Activated naive CD4-positive, alpha-beta T cell treated with anti-CD3 and anti-CD28 coated beads for 36 hours (primary cell): ENCODE measurements at regions of chr7 and their contacts with region 1.

Region 1: DNA sequence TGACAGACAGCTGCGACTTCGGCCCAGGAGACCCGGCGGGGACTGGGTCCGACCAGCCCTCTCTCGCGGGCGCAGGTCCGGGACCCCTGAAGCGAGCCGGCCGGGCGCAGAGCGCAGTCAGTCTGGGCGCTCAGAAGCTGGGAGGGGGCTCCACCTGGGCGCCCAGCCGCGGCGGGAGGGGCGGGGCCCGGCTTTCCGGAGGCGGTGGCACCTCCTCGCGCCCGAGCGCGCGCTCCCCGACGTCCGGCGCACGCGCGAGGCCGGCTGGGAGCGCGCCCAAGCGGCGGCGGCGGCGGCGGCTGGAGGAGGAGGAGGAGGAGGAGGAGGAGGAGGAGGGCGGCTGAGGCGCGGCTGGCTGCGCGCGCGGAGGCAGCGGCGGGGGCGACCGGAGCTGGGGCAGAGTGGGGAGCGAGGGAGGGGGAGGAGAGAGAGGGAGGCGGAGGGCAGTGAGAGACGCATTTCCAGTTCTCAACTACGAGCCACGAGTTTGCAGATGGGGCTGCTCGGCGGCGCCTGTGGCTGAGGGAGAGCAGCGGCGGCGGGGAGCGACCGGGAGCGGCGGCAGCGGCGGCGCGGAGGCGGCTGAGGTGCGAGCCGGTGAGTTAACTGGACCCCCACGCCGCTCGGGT is at the start of gene PALS2:
- DNase-seq: peak; percentile 76
- H3K4me3 Mint-ChIP-seq: peak within 1 kb of the TSS; percentile 84
- H3K27ac Mint-ChIP-seq: peak within 1 kb of the TSS; percentile 72
- H3K4me1 Mint-ChIP-seq: peaks cover 32% of the 10 kb centered on the region
- H3K27me3 Mint-ChIP-seq: peaks cover 3% of the 10 kb centered on the region
- total RNA-seq, gene PALS2: 21.8 to 22.5 TPM

Region 2: DNA sequence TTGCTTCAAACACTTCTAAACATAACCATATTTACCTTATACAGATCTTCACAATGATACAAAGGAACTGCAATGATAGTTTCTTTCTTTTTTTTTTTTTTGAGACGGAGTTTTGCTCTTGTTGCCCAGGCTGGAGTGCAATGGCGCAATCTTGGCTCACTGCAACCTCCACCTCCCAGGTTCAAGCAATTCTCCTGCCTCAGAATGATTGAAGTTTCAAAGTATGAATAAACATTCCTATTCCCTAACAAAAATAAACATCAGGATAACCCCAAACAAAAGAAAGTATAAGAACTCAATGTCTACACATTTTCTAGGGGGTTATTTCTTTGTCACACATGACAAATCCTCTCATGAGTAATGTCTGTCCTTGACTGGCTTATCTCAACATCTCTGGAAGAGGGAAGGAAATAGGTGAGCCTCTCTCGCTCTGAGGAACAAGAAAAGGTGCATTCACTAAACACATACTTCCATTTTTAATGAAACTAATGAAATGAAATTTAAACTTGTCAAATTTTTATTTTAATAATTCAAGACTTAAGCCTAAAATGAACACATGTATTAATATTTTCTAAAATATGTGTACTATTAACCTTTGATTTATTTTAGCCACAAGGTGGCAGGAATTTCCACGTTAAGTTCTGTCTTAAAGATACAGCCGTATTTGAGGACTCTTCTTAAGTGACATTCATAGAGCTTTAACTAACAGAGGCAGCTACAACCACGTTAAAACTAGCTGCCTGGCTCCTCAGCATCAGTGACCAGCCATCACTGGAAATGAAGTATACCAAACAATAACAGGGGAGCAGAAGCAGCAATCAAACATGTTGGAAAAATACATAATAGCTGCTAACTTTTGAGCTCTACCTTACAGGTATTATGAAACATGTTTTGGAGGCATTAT is 1215.7 kb before region 1 on chr7:
- CTCF ChIA-PET with region 1: no interaction called
- intact Hi-C with region 1: loop called (anchors 5 kb)
- DNase-seq: no peak
- H3K4me3 Mint-ChIP-seq: no peak overlapping the region
- H3K27ac Mint-ChIP-seq: no peak overlapping the region
- H3K4me1 Mint-ChIP-seq: peaks cover 15% of the 10 kb centered on the region
- H3K27me3 Mint-ChIP-seq: peaks cover 3% of the 10 kb centered on the region

Region 3: DNA sequence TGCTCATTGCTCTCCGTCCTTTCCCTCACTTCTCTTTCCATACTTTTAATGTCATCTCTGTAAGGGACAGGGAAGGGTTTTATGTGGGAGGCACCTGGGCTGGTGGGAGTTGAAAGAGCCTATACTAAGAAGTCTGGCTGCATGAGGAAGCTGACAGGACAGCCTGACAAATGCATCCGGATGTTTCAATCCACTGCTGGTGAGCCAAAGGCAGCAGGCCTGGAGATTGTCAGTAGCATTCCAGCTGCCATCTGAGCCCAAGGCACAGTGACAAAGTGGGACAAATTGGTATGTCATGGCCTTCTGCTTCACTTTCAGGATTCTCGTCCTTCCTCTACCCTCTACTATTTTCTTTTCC is 644.7 kb before region 1 on chr7:
- CTCF ChIA-PET with region 1: no interaction called
- intact Hi-C with region 1: no loop called
- DNase-seq: no peak
- H3K4me3 Mint-ChIP-seq: no peak overlapping the region
- H3K27ac Mint-ChIP-seq: no peak overlapping the region
- H3K4me1 Mint-ChIP-seq: no peaks in the 10 kb centered on the region
- H3K27me3 Mint-ChIP-seq: peaks cover 2% of the 10 kb centered on the region

Region 4: DNA sequence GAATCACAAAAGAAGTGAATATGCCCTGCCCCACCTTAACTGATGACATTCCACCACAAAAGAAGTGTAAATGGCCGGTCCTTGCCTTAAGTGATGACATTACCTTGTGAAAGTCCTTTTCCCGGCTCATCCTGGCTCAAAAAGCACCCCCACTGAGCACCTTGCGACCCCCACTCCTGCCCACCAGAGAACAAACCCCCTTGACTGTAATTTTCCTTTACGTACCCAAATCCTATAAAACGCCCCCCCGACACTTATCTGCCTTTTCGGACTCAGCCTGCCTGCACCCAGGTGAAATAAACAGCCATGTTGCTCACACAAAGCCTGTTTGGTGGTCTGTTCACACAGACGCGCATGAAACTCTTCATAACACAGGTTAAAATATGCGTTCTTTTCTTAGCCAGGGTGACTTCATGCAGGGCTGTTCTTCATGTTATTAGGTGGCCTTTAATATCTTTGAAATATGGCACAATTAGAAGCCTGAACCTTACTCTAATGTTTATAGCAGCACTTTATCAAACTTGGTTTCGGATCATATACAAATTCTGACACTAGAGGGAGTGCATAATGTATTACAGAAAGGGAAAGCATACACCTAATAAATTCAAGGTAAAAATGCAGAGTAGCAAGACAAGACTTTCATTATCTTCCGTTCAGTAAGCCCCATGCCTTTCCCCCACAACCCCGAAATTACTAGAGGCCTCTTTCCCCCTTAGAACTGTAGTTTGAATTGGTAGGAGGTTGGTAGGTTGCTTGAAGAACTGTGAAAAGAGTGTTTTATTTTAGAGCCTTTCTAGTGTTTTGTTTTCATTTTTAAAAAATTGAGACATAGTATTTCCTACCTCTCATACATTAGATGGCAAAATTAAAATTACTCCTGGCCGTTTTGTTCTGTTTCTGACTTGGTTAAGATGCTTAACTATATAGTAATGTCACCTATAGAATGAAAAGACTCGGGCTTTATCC is 171.2 kb before region 1 on chr7:
- CTCF ChIA-PET with region 1: no interaction called
- intact Hi-C with region 1: loop called (anchors 5 kb)
- DNase-seq: no peak
- H3K4me3 Mint-ChIP-seq: no peak overlapping the region
- H3K27ac Mint-ChIP-seq: no peak overlapping the region
- H3K4me1 Mint-ChIP-seq: peaks cover 7% of the 10 kb centered on the region
- H3K27me3 Mint-ChIP-seq: no peaks in the 10 kb centered on the region

Region 5: DNA sequence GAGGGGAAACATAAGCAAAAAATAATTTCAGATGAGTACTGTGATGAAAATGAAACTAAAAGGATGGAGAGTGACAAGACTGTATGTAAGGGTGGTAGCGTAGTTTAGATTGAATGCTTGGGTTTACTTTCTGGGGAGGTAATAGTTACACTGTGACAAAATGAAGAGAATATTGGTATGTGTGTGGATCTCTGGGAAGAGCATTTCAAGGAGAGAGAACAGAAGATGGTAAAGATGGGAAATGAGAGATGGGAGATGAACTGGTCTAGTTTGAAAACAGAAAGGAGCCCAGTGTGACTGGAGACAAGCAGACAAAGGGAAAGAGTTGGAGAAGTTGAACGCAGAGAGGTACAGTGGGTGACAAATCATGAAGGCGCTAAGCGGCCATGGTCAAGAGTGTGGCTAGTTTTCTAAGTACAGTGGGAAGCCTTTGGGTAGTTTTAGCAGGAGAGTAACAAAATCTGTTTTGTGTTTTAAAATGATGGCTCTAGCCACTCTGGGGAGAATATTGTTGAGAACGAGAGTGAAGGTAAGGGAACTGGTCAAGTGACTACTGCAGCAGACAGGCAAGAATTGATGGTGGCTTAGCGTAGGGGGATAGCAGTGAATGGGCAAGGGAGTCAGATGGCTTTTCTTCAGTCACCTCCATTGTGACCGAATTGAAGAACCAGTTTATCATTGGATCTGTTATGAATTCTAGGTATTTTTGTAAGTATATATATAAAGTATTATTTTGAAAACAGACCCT is 22.7 kb after region 1 on chr7:
- CTCF ChIA-PET with region 1: interaction called, 3 read pairs
- intact Hi-C with region 1: loop called (anchors 2 kb)
- DNase-seq: no peak
- H3K4me3 Mint-ChIP-seq: no peak overlapping the region
- H3K27ac Mint-ChIP-seq: no peak overlapping the region
- H3K4me1 Mint-ChIP-seq: peaks cover 11% of the 10 kb centered on the region
- H3K27me3 Mint-ChIP-seq: no peaks in the 10 kb centered on the region

Region 6: GRCh38 chr7:24907311-24907886 is 334.3 kb after region 1 on chr7:
- CTCF ChIA-PET with region 1: no interaction called
- intact Hi-C with region 1: loop called (anchors 10 kb)
- DNase-seq: peak; percentile 48
- H3K4me3 Mint-ChIP-seq: no peak overlapping the region
- H3K27ac Mint-ChIP-seq: no peak overlapping the region
- H3K4me1 Mint-ChIP-seq: peaks cover 34% of the 10 kb centered on the region
- H3K27me3 Mint-ChIP-seq: no peaks in the 10 kb centered on the region

Region 7: GRCh38 chr7:25069900-25070443 is 496.9 kb after region 1 on chr7:
- CTCF ChIA-PET with region 1: interaction called, 6 read pairs
- intact Hi-C with region 1: loop called (anchors 5 kb)
- DNase-seq: peak; percentile 57
- H3K4me3 Mint-ChIP-seq: no peak overlapping the region
- H3K27ac Mint-ChIP-seq: no peak overlapping the region
- H3K4me1 Mint-ChIP-seq: peaks cover 6% of the 10 kb centered on the region
- H3K27me3 Mint-ChIP-seq: no peaks in the 10 kb centered on the region

Region 8: DNA sequence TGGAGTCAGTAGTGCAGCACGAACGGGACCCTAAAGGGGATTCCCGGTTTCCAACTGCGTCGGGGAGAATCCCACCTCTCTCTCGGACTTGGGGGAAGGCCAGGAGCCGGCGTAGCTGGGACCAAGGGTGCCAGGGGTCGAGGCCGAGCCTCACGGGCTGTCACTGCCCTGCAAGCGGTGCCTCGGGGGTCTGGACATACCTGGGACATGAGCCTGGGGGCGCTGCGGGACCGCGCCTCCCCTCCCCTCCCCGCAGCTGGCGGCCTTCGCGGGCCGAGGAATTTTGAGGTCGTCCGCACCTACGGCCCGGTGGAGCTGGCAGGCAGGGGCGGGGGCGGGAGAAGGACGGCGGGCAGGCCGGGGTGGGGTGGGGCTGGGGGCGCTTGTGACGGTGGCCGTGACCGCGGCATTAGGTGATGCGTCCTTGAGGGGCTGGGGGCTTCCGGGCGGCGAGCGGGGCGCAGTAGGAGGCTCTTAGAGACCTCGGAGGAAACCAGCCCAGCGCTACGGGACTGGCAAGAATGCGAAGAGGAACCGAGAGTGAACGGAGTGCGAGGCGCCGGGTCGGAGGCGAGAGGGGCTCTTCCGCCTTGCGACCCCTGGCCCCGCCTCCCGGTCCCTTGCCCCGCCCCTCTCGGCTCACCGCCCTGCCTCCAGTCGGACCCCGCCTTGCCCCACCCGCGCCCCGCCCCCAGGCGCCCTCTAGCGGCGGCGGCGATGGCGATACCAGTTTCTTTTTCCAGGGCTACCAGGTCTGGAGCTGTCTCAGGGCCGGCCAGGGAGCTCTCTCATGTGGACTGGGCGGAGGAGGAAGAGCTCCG is 606.9 kb after region 1 on chr7:
- CTCF ChIA-PET with region 1: no interaction called
- intact Hi-C with region 1: loop called (anchors 2 kb)
- DNase-seq: peak; percentile 94
- H3K4me3 Mint-ChIP-seq: peak overlapping the region; percentile 83
- H3K27ac Mint-ChIP-seq: peak overlapping the region; percentile 81
- H3K4me1 Mint-ChIP-seq: peaks cover 19% of the 10 kb centered on the region
- H3K27me3 Mint-ChIP-seq: no peaks in the 10 kb centered on the region